Activated CD8-positive, alpha-beta memory T cell treated with anti-CD3 and anti-CD28 coated beads, Interleukin-2, amount 10 ng/mL, durations not matched to agents 7 days and 5 days (primary cell): ENCODE measurements at regions of chr11 and their contacts with region 1.

Region 1: DNA sequence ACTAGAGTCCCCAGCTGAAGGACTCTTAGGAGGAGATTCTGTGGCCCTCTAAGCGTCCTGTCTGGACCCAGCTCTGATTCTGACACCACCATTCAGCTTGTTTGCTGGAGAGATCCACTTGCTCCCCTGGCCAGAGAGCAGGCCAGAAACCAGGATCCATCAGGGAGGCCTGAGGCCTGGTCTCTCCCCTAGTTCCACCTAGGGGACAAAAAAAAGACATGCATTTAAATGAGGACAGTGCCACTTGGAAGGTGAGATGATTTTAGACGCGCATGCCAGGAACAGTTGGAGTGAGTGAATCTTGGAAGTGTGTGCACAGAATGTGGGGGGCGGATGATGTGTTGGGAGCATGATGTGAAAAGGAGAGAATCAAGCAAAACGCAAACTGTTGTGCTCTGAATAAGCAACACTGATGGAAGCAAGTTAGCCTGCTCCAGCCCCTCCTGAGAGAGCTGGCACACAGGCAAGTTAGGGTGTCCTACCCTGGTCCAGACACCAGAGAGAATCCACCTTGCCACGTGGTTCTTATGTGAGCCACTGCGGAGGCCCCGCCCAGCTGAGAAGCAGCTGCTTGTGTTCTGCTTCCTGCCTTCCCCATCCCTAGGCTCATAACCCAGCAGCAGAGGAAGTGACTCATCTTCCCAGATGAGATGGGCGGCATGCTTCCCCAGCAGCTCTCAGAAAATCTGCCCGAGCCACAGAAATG is 8.0 kb upstream of the SLCO2B1 start:
- DNase-seq: peak; percentile 92
- ATAC-seq: peak; percentile 90
- H3K4me3 Mint-ChIP-seq: peak overlapping the region; percentile 22
- H3K27ac Mint-ChIP-seq: peak overlapping the region; percentile 76
- H3K4me1 Mint-ChIP-seq: peaks cover 54% of the 10 kb centered on the region
- H3K27me3 Mint-ChIP-seq: peaks cover 35% of the 10 kb centered on the region

Region 2: DNA sequence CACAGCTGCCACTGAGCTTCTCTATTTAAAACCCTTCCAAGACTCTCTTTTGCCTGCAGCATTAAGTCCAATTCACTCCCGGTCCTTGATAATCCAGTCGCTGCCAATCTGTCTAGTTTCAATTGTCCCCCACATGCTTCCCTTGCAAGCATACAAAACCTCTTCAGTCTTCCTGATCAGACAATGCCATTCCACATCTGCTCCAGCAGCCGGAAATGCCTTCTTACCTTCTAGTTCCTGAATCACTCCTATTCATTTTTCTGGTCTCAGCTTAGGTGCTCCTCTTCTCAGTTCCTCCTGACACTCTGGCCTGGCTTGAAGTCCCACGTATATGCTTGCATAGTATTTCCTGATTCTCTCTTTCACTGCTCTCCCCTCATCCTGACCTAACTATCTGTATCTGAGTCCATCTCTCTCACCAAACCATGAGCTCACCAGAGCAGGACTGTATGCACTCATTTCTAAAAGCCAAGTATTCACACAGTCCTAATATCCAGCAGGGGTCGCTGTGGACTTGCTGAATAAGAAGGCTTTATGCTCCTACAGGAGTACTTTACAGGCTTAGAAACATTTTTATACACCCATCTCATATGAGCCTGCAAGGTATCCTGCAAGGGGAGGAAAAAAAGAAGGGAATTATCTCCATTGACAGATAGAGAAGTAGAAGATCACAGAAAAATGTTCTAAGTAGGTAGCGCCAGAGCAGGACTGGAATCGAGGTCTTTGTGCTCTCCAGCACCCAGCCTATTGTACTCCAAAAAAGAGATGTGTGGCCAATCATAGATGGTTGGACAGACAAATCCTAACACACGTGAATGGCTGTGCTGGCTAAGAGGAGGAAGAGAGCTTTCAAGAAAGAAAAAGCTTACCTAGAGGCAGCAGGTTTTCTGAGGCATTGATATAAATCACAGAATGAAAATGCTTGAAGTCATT is 213.2 kb before region 1 on chr11:
- CTCF ChIA-PET with region 1: interaction called, 125 read pairs
- DNase-seq: peak; percentile 80
- ATAC-seq: peak; percentile 66
- H3K4me3 Mint-ChIP-seq: no peak overlapping the region
- H3K27ac Mint-ChIP-seq: no peak overlapping the region
- H3K4me1 Mint-ChIP-seq: peaks cover 54% of the 10 kb centered on the region
- H3K27me3 Mint-ChIP-seq: no peaks in the 10 kb centered on the region

Region 3: GRCh38 chr11:75160192-75160757 is 17.4 kb after region 1 on chr11:
- CTCF ChIA-PET with region 1: interaction called, 20 read pairs
- DNase-seq: no peak
- ATAC-seq: no peak
- H3K4me3 Mint-ChIP-seq: no peak overlapping the region
- H3K27ac Mint-ChIP-seq: no peak overlapping the region
- H3K4me1 Mint-ChIP-seq: peaks cover 5% of the 10 kb centered on the region
- H3K27me3 Mint-ChIP-seq: peaks cover 33% of the 10 kb centered on the region

Region 4: DNA sequence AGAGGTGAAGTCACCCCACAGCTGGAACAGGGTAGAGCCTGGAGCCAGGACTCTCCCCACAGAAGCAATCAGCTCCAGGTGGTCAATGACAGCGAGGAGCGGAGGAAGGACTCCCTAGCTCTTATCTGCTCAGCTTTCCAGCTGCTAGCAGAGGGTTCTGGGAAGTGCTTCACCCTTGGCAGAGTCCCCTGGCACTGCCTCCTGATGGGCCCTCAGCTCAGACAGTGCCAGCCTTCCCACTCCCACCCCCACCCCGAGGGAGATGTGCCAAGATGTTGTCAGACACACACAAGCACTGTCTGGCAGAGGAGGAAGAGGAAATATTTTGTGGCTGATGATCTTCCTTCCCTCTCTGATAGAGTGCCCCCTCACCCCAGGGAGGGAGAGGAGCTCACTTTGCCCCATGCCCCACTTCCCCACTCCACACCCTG is 52.3 kb after region 1 on chr11:
- CTCF ChIA-PET with region 1: interaction called, 556 read pairs
- DNase-seq: no peak
- ATAC-seq: no peak
- H3K4me3 Mint-ChIP-seq: no peak overlapping the region
- H3K27ac Mint-ChIP-seq: no peak overlapping the region
- H3K4me1 Mint-ChIP-seq: no peaks in the 10 kb centered on the region
- H3K27me3 Mint-ChIP-seq: peaks cover 24% of the 10 kb centered on the region

Region 5: DNA sequence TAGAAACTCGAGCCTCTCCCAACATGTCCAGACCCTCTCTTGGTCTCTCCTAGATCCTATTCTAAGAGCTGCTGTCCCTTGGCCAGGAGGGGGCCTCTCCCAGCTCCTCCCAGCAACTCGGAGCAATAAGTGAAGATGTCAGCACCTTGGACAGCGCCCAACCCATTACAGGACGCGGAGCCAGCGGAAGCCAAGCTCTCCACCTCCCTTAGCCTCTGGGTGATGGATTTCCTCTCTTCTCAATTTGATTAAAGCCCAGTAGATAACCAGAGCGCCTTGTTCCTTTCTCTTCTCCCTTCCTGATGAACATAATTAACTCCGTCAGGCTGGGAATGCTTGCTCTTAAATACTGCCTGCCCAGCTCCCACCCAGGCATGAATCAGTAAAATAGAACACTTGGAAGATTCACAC is 71.5 kb after region 1 on chr11:
- CTCF ChIA-PET with region 1: interaction called, 18 read pairs
- DNase-seq: peak; percentile 88
- ATAC-seq: peak; percentile 85
- H3K4me3 Mint-ChIP-seq: no peak overlapping the region
- H3K27ac Mint-ChIP-seq: no peak overlapping the region
- H3K4me1 Mint-ChIP-seq: peaks cover 3% of the 10 kb centered on the region
- H3K27me3 Mint-ChIP-seq: peaks cover 37% of the 10 kb centered on the region

Region 6: GRCh38 chr11:75270896-75271418 is 128.1 kb after region 1 on chr11:
- CTCF ChIA-PET with region 1: interaction called, 97 read pairs
- DNase-seq: no peak
- ATAC-seq: no peak
- H3K4me3 Mint-ChIP-seq: no peak overlapping the region
- H3K27ac Mint-ChIP-seq: no peak overlapping the region
- H3K4me1 Mint-ChIP-seq: peaks cover 14% of the 10 kb centered on the region
- H3K27me3 Mint-ChIP-seq: no peaks in the 10 kb centered on the region